Activated naive CD4-positive, alpha-beta T cell treated with anti-CD3 and anti-CD28 coated beads, Interleukin-2, amount 10 ng/mL, durations not matched to agents 7 days and 5 days (primary cell): ENCODE measurements at regions of chr14 and their contacts with region 1.

Region 1: DNA sequence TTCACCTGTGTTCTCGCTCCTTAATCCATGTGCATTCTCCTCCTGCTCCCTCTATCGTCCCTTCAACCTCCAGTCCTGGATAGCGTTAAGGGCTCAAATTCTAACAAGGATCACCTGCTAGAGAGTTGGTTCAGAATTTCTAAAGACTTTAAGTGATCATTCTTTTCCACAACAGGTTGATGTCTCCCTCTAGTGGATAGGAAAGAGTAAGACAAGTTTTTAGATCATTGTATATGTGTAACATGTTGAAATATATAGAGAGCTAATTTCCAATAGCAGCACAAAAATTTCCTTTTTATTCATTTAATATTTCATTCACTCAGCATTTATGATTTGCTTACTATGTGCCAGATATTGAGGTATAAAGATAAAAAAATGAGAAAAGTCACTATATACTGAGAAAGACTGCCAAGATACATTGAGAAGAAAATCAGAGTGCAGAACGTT is 9.3 kb upstream of the ESR2 start:
- DNase-seq: no peak
- H3K4me3 Mint-ChIP-seq: no peak overlapping the region
- H3K27ac Mint-ChIP-seq: no peak overlapping the region
- H3K4me1 Mint-ChIP-seq: no peaks in the 10 kb centered on the region
- H3K27me3 Mint-ChIP-seq: peaks cover 14% of the 10 kb centered on the region

Region 2: DNA sequence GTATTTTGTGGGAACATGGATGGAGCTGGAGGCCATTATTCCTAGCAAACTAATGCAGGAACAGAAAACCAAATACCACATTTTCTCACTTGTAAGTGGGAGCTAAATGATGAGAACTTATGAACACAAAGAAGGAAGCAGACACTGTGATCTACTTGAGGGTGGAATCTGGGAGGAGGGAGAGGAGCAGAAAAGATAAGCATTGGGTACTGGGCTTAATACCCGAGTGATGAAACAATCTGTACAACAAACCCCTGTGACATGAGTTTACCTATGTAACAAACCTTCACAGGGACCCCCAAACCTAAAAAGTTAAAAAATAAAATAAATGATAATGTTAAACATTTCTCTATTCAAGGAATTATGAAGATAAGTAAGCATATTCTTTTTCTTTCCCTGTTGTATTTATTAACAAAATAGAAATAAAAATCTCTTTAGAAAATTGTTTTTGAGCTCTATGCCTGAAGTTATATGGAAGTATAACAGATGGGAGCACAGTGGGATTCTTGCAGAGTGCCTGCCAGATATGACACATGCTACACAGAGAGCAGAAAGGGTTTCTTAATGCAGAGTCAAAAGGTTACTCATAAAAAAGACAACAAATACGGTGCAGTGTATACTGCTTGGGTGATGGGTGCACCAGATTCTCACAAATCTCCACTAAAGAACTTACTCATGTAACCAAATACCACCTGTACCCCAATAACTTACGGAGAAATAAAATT is 502.7 kb before region 1 on chr14:
- CTCF ChIA-PET with region 1: interaction called, 34 read pairs
- DNase-seq: no peak
- H3K4me3 Mint-ChIP-seq: no peak overlapping the region
- H3K27ac Mint-ChIP-seq: no peak overlapping the region
- H3K4me1 Mint-ChIP-seq: peaks cover 6% of the 10 kb centered on the region
- H3K27me3 Mint-ChIP-seq: peaks cover 17% of the 10 kb centered on the region

Region 3: DNA sequence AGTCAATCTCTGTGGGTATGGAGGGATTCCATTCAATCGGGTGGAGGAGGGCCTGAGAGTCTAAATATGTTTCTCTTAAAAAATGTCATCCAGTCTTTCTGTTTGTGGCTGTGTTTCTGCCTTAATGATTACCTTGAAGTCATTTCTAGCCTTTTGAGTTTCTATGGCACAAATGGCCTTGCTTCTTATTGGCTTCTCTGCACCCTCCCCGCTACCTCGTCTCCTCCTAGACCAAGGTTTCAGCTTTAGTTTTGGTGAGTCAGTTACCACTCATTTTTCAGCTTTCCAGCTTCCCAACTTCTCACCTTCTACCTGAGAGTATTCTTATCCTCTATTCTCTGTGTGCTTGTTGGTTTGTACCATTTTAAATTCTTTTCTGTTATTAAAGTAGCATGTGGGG is 291.5 kb before region 1 on chr14:
- CTCF ChIA-PET with region 1: interaction called, 16 read pairs
- DNase-seq: no peak
- H3K4me3 Mint-ChIP-seq: no peak overlapping the region
- H3K27ac Mint-ChIP-seq: no peak overlapping the region
- H3K4me1 Mint-ChIP-seq: no peaks in the 10 kb centered on the region
- H3K27me3 Mint-ChIP-seq: no peaks in the 10 kb centered on the region

Region 4: DNA sequence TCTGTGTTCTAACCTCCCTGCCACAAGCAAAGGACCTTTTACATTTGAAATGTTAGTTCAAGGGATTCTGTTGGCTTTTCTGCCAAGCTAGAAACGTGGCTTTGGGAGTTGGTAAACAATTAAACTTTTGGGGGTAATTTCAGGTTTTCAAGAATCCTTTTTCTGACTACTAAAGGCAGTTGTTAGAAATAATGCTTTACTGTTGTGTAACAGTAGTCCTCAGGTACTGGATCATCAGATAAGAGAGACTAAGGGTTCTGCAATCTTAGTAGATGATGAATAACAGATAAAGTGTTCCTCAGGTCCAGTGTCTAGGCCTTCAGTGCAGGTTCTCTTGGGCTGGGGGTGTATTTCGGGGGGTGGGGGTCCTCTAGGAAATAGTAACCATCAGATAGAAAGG is 258.4 kb before region 1 on chr14:
- CTCF ChIA-PET with region 1: no interaction called
- DNase-seq: no peak
- H3K4me3 Mint-ChIP-seq: no peak overlapping the region
- H3K27ac Mint-ChIP-seq: no peak overlapping the region
- H3K4me1 Mint-ChIP-seq: no peaks in the 10 kb centered on the region
- H3K27me3 Mint-ChIP-seq: no peaks in the 10 kb centered on the region

Region 5: DNA sequence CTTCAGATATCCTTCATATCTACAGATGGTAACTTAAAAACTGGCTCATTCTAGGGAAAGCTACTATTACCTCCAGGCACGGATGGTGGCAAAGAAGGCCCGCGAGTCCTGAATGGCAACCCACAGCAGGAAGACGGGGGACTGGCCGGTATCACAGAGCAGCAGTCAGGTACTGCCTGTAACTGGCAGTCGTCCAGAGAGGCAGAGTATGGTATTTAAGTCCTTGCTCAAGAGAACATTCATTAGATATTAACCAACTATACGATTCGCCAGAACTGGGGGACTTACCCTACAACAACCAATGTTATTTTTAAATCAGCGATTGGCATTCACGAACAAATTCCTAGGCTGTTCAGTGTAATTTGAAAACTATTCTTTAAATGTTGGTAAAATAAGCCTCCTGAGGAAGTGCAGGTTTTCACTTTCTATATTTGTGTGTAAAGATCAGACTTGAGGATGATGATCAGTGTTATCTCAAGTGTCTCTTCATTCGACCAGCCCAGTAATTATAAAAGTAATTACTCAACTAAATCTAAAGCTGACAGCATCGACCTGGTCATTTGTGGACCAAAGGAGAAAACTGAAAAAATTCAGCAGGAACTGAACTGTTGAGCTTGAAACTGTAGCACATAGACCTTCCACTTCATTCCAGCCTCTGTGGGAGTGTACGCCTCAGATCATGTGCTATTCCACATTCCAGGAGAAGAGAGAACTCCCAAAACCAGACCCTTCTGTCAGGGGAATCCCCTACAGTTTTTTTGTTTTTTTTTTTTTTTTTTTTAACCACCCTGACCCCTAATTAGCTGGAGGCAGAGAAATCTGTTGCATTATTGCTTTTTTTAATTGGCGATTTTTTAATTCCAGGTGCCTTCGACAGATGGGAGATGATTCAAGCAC is 84.9 kb before region 1 on chr14:
- CTCF ChIA-PET with region 1: interaction called, 11 read pairs
- DNase-seq: no peak
- H3K4me3 Mint-ChIP-seq: no peak overlapping the region
- H3K27ac Mint-ChIP-seq: peak overlapping the region; percentile 3
- H3K4me1 Mint-ChIP-seq: no peaks in the 10 kb centered on the region
- H3K27me3 Mint-ChIP-seq: no peaks in the 10 kb centered on the region

Region 6: DNA sequence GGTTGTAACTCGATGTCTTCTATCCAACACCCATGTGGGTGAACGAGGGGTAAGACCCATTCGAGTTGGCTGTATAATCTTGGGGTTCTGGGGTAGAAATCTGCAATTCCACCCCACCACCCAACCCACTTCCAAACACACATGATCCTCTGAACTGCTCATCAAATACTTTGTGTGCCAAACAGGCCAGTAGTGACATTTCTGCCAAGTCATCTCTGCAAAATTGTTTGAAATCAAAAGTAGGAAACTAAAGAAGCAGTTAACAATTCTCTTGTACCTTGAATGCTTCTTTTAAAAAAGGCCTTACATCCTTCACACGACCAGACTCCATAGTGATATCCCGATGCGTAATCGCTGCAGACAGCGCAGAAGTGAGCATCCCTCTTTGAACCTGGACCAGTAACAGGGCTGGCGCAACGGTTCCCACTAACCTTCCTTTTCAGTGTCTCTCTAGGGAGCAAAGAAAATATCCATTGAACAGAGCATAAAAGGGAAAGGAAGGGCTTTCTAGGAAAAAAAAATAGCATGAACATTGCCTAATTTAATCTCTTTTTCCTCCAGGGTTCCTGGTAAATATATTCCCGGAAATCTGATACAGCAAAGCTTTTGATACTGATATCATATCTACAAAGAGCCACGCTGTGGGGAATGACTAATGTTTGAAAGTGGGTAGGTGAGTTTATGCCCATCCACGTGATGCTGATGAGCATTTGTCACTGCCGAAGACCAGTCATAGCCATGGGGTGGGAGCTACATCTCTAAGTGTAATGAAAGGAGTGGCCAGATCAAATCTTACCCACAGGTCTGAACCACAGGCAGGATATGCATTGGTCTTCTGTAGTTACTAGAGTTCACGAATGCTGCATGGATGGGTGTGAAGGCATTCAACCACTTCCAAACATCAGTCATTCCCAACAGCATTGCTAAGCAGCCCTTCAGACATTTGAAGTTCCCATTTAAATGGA is 23.5 kb before region 1 on chr14:
- CTCF ChIA-PET with region 1: no interaction called
- DNase-seq: no peak
- H3K4me3 Mint-ChIP-seq: no peak overlapping the region
- H3K27ac Mint-ChIP-seq: no peak overlapping the region
- H3K4me1 Mint-ChIP-seq: peaks cover 18% of the 10 kb centered on the region
- H3K27me3 Mint-ChIP-seq: no peaks in the 10 kb centered on the region